A549 (cell line): ENCODE measurements at regions of chr20 and their contacts with region 1.

Region 1: DNA sequence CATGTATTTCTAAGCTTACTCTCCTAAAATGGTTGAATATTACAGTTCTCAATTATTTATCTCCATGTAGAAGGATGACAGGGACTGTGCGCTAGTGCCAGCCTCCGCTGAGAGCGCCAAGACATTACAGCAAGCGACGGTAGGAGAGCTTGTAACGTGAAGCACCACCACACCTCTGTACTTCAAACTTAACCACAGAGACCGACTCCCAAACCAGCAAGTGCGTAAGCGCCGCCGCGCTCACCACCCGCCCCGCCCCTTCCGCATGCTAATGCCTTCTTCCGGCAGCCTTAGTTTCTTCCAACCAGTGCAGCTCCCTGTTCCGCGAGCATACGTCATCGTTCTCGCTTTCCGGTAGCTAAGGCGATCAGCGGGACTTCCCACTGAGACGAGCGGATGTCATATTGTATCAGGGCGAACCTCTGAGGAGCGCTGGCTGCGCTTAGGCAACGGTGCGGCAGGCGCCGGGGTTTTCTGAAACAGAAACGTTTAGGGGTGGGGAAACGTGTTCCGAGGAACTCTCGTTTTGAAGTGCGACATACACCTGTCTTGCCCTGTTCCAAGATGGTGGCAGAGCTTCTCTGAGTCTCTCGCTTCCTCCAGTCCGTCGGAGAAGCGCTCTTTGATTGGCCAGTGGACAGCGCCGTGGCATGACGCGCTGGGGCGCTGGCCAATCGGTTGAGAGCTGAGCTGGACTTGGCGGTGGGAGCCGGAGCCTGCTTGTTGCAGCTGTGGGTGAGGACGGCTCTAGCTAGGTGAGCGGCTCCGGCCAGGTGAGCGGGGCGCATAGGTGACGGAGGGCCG is at the start of gene SEC23B:
- DNase-seq: peak; percentile 99
- ATAC-seq: peak; percentile 98 to 99
- H3K4me3 ChIP-seq: peak within 1 kb of the TSS; percentile 68
- H3K27ac ChIP-seq: peak within 1 kb of the TSS; percentile 95
- H3K4me1 ChIP-seq: peaks cover 14% of the 10 kb centered on the region; the same call in 2 of the 3 replicates
- CTCF ChIP-seq: no peak
- EP300 ChIP-seq: no peak
- POLR2A ChIP-seq: peak; percentile 91
- RAD21 ChIP-seq: no peak
- polyA plus RNA-seq, gene SEC23B: 158 and 186 TPM in 2 replicates

Region 2: DNA sequence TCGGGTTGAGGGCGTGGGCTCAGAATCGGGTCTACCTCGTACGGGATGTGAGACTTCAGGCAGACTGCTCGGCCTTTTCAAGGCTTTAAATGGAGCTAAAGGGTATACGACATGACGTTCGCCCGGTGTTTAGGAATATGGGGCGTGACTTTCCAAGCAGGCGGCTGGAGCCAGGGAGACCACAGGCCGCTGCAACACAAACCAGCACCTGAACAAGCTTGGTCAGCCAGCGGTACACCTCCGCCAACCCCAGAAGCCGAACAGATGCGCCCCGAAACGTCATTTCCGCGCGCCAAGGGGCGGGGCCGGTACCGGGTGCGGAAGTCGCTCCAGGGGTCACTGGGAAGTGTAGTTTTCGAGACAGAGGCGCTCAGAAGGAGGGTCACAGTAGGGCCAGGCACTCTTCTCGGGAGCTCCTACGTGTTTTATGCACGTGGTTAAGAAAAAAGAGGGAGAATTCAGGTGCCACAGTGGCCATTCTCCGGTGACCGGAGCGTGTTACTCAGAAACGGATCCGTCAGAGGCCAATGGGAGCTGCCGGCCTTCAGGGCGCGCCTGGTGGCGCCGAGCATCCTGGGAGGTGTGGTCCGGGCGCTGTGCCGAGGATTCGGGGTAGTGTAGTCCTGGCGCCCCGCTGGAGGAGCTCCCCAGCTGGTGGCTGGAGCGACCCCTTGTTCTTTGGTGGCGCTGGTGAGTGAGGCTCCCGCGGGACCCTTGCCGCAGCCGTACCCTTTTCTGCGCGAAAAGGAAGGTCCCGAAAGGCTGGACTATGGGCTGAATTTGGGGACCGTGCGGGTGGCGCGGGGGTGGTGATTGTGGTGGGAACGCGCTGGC is 219.3 kb before region 1 on chr20 and contains the start of gene ZNF133:
- CTCF ChIA-PET with region 1: no interaction called
- POLR2A ChIA-PET with region 1: interaction called, 11 read pairs
- DNase-seq: peak; percentile 96
- ATAC-seq: peak; percentile 98
- H3K4me3 ChIP-seq: peak within 1 kb of the TSS; percentile 81
- H3K27ac ChIP-seq: peak within 1 kb of the TSS; percentile 94 to 95
- H3K4me1 ChIP-seq: peaks cover 10% of the 10 kb centered on the region
- CTCF ChIP-seq: no peak
- EP300 ChIP-seq: no peak
- POLR2A ChIP-seq: peak; percentile 92
- RAD21 ChIP-seq: no peak
- polyA plus RNA-seq, gene ZNF133: 11.6 and 16.6 TPM in 2 replicates

Region 3: GRCh38 chr20:18466894-18467730 is 40.3 kb before region 1 on chr20 and contains the starts of genes DZANK1 and POLR3F:
- CTCF ChIA-PET with region 1: no interaction called
- POLR2A ChIA-PET with region 1: interaction called, 48 read pairs
- DNase-seq: peak; percentile 97 to 99
- ATAC-seq: peak; percentile 99 to 100
- H3K4me3 ChIP-seq: peak within 1 kb of the TSS; percentile 76
- H3K27ac ChIP-seq: peak within 1 kb of the TSS; percentile 85 to 86
- H3K4me1 ChIP-seq: peaks cover 21% of the 10 kb centered on the region
- CTCF ChIP-seq: no peak
- EP300 ChIP-seq: no peak
- POLR2A ChIP-seq: peak; percentile 80
- RAD21 ChIP-seq: no peak
- polyA plus RNA-seq, gene DZANK1: 5.1 and 5.8 TPM in 2 replicates
- polyA plus RNA-seq, gene POLR3F: 13.6 and 20.7 TPM in 2 replicates

Region 4: DNA sequence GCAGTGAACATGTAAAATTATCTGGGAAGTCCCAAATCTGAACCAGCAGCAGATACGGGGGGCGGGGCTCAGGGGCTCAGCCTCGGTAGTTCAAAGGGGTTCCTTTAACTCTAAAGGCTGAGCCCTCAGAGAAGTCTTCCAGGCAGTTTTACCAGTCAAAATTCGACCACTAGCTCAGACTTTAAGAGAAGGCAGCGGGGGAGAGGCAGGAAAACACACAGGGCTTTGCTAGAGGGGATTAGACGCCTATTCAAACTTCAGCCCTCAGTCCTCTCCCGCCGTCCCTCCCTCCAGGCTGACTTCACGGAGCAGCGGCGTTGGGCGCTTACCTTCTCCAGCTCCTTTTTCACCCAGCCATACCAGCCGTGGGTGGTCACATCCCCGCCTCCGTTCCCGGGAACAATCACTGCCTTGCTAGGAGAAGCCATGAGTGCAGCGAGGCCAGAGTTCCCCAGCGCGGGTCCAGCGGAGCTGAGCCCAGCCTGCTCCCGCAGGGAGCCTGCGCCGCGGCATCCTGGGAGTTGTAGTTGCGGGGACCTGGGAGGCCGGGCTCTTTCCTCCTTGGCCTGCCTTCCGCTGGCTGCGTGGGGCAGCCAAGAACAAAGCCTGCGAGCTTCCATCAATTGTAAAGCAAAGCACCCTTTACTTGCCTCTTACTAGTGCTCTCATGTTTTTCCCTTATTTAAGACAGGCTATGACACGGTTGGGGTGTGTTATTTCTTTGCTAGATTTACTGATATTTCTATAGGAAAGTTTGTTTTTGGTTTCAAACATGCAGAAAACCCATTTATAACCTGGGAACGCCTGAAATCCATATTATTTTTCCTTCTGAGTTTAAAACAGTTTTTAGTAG is 10.5 kb before region 1 on chr20 and contains the start of gene RBBP9:
- CTCF ChIA-PET with region 1: interaction called, 15 read pairs
- POLR2A ChIA-PET with region 1: interaction called, 75 read pairs
- DNase-seq: peak; percentile 86 to 88
- ATAC-seq: peak; percentile 100
- H3K4me3 ChIP-seq: peak within 1 kb of the TSS; percentile 70
- H3K27ac ChIP-seq: peak within 1 kb of the TSS; percentile 82 to 87
- H3K4me1 ChIP-seq: peaks cover 12% of the 10 kb centered on the region
- CTCF ChIP-seq: no peak
- EP300 ChIP-seq: no peak
- POLR2A ChIP-seq: peak; percentile 92
- RAD21 ChIP-seq: no peak
- polyA plus RNA-seq, gene RBBP9: 35.1 and 41.1 TPM in 2 replicates

Region 5: DNA sequence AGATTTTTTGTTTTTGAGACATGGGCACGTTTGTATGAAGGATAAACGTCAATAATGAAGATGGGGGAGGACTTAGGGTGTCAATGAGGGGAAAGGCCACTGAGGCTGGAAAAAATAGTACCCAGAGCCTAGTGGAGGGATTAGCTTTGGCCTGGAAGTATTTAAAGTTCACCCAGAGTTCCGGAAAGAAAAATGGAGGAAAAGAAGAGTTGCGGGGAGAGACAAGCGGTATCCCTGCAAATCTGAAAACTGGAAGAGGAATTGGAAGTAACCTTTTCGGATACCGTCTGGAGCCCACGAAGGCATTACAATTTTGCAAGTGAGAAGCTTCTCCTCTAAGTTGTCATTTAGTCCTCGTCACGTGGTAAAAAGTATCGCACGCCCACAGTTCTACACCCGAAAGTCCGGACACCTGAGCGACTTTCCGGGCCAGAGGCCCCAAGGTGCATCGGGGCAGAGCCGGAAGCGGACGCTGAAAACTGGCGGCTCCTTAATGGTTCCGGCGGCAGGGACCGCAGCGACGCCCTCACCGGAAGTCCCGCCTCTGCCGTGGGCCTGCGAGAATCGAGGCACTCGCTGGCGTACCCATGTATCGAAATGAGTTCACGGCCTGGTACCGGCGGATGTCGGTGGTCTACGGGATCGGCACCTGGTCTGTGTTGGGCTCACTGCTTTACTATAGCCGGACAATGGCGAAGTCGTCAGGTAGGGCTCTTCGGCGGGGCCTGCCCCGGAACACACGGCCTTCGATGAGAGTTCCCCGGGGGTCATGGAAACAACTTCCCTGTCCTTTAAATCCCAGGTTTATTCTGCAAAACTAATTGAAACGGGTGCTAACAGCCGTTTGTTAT is 59.7 kb after region 1 on chr20 and contains the start of gene SMIM26:
- CTCF ChIA-PET with region 1: interaction called, 5 read pairs
- POLR2A ChIA-PET with region 1: interaction called, 16 read pairs
- DNase-seq: peak; percentile 96 to 98
- ATAC-seq: peak; percentile 100
- H3K4me3 ChIP-seq: peak within 1 kb of the TSS; percentile 65
- H3K27ac ChIP-seq: peak within 1 kb of the TSS; percentile 85 to 94
- H3K4me1 ChIP-seq: peaks cover 12% of the 10 kb centered on the region; the same call in 1 of the 3 replicates
- CTCF ChIP-seq: no peak
- EP300 ChIP-seq: no peak
- POLR2A ChIP-seq: peak; percentile 92
- RAD21 ChIP-seq: no peak
- polyA plus RNA-seq, gene SMIM26: 291 and 338 TPM in 2 replicates

Region 6: GRCh38 chr20:18632196-18633009 is 125.0 kb after region 1 on chr20:
- CTCF ChIA-PET with region 1: no interaction called
- POLR2A ChIA-PET with region 1: no interaction called
- DNase-seq: peak; percentile 63 to 70
- ATAC-seq: peak; percentile 95 to 99
- H3K4me3 ChIP-seq: no peak overlapping the region
- H3K27ac ChIP-seq: no peak overlapping the region
- H3K4me1 ChIP-seq: no peaks in the 10 kb centered on the region
- CTCF ChIP-seq: peak; percentile 94
- EP300 ChIP-seq: no peak
- POLR2A ChIP-seq: no peak
- RAD21 ChIP-seq: peak; percentile 94 to 98